Activated CD4-positive, alpha-beta T cell treated with anti-CD3 and anti-CD28 coated beads for 36 hours (primary cell): ENCODE measurements at regions of chr5 and their contacts with region 1.

Region 1: DNA sequence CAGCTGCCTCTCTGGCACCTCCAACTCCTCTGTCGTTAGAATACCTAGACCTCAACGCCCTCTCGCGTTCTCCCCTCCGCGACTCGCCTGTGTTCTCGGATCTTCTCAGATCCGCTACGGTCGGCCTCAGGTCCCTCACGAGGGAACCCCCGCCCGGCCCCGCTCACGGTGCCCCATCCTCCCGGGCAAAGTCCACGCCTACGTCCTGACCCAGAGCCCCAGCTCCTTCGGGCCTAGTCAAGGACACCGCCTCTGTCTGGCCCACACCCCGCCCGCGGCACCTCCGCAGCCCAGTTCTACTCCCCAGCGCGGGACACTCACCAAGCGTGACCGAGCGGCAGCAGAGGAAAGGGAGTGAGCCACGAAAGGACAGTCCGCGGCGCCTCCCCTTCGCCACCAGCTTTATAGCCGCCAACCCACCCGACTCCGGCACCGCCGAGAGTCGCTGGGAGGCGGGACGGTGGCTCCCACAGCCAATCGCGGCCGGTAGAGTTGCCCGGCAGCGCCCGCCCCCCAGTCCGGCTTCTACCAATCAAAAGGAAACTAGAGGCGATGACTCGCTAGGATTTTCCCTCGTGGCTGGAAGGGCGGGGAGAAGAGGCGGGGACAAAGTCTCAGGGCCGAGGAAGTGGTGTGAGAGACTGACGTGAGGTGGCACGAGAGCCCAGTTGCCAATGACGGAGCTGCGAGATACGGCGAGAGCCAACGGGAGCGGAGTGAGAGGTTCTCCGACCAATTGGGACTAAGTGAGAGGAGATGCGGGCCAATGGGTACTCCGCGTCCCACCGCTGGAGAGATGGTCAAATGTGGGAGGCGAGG is at the start of gene HMGCS1:
- DNase-seq: peak; percentile 99
- ATAC-seq: peak; percentile 90
- H3K4me3 Mint-ChIP-seq: peak within 1 kb of the TSS; percentile 93
- H3K27ac Mint-ChIP-seq: peak within 1 kb of the TSS; percentile 96
- H3K4me1 Mint-ChIP-seq: peaks cover 71% of the 10 kb centered on the region
- H3K27me3 Mint-ChIP-seq: no peaks in the 10 kb centered on the region
- total RNA-seq, gene HMGCS1: 95.2 to 102 TPM

Region 2: GRCh38 chr5:42950440-42951292 is 362.6 kb before region 1 on chr5:
- CTCF ChIA-PET with region 1: no interaction called
- POLR2A ChIA-PET with region 1: no interaction called
- intact Hi-C with region 1: loop called in 1 of 2 experiments (anchors 1 kb)
- DNase-seq: peak; percentile 82
- ATAC-seq: peak; percentile 59
- H3K4me3 Mint-ChIP-seq: peak overlapping the region; percentile 83
- H3K27ac Mint-ChIP-seq: peak overlapping the region; percentile 91
- H3K4me1 Mint-ChIP-seq: peaks cover 17% of the 10 kb centered on the region
- H3K27me3 Mint-ChIP-seq: no peaks in the 10 kb centered on the region

Region 3: GRCh38 chr5:43040287-43041098 is 272.8 kb before region 1 on chr5 and contains the start of gene ANXA2R:
- CTCF ChIA-PET with region 1: interaction called, 5 read pairs
- POLR2A ChIA-PET with region 1: no interaction called
- intact Hi-C with region 1: loop called in 1 of 2 experiments (anchors 1 kb)
- DNase-seq: peak; percentile 96
- ATAC-seq: peak; percentile 56
- H3K4me3 Mint-ChIP-seq: peak within 1 kb of the TSS; percentile 81
- H3K27ac Mint-ChIP-seq: peak within 1 kb of the TSS; percentile 94
- H3K4me1 Mint-ChIP-seq: peaks cover 39% of the 10 kb centered on the region
- H3K27me3 Mint-ChIP-seq: no peaks in the 10 kb centered on the region
- total RNA-seq, gene ANXA2R: 3.2 to 4.6 TPM

Region 4: DNA sequence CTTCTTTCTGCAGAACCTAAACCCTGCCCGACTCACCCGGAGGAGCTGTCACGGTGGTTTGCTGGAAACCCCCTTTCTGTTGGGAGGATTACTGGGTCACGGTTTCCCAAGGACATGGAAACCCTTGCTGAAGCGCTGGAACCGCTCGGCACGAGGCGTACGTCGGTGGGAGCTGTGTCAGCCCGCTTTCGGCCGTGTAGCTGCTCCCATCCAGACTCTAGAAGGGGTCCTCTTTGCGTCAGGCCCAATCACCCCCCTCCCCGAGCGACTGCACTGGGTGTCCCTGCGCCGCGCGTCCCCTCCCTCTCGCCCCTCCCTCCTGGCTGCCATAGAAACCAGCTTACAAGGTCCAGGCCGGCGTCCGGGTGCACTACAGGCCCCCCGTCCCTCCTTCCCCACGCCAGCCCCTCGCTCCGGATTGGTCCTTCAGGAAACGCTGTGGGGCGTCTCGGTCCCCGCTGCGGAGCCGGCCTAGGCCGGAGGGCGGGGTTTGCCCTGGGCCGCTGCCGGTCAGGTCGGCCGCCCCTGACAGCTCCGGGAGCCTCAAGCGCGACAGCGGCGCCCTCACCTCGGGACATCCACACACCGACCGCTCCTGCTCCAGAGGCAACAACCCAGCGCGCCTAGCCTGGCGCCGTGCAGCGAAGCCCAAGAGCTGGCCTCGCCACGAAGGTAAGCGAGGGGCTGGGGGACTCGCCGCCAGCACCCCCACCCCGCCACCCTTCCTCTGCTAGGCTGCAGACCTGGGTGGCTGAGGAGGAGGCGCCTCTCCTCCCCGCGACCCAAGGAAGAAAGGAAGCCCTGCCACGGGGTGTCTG is 121.3 kb before region 1 on chr5 and contains the start of gene NIM1K:
- CTCF ChIA-PET with region 1: interaction called, 3 read pairs
- POLR2A ChIA-PET with region 1: interaction called, 14 read pairs
- intact Hi-C with region 1: loop called (anchors 1 kb)
- DNase-seq: peak; percentile 65
- ATAC-seq: peak; percentile 32
- H3K4me3 Mint-ChIP-seq: peak within 1 kb of the TSS; percentile 79
- H3K27ac Mint-ChIP-seq: peak within 1 kb of the TSS; percentile 73
- H3K4me1 Mint-ChIP-seq: peaks cover 32% of the 10 kb centered on the region
- H3K27me3 Mint-ChIP-seq: peaks cover 16% of the 10 kb centered on the region
- total RNA-seq, gene NIM1K: 2.1 to 2.3 TPM

Region 5: GRCh38 chr5:43484106-43484849 is 171.0 kb after region 1 on chr5:
- CTCF ChIA-PET with region 1: interaction called, 13 read pairs
- POLR2A ChIA-PET with region 1: interaction called, 34 read pairs
- intact Hi-C with region 1: loop called (anchors 1 kb)
- DNase-seq: peak; percentile 92
- ATAC-seq: peak; percentile 73
- H3K4me3 Mint-ChIP-seq: peak overlapping the region; percentile 97
- H3K27ac Mint-ChIP-seq: peak overlapping the region; percentile 100
- H3K4me1 Mint-ChIP-seq: peaks cover 37% of the 10 kb centered on the region
- H3K27me3 Mint-ChIP-seq: no peaks in the 10 kb centered on the region

Region 6: GRCh38 chr5:43664501-43665040 is 351.3 kb after region 1 on chr5:
- CTCF ChIA-PET with region 1: no interaction called
- POLR2A ChIA-PET with region 1: no interaction called
- intact Hi-C with region 1: no loop called
- DNase-seq: no peak
- ATAC-seq: no peak
- H3K4me3 Mint-ChIP-seq: no peak overlapping the region
- H3K27ac Mint-ChIP-seq: no peak overlapping the region
- H3K4me1 Mint-ChIP-seq: no peaks in the 10 kb centered on the region
- H3K27me3 Mint-ChIP-seq: no peaks in the 10 kb centered on the region

Region 7: GRCh38 chr5:44808435-44809214 is 1495.4 kb after region 1 on chr5 and contains the start of gene MRPS30:
- CTCF ChIA-PET with region 1: no interaction called
- POLR2A ChIA-PET with region 1: no interaction called
- intact Hi-C with region 1: loop called in 1 of 2 experiments (anchors 10 kb)
- DNase-seq: peak; percentile 93
- ATAC-seq: peak; percentile 96
- H3K4me3 Mint-ChIP-seq: peak within 1 kb of the TSS; percentile 91
- H3K27ac Mint-ChIP-seq: peak within 1 kb of the TSS; percentile 98
- H3K4me1 Mint-ChIP-seq: peaks cover 27% of the 10 kb centered on the region
- H3K27me3 Mint-ChIP-seq: no peaks in the 10 kb centered on the region
- total RNA-seq, gene MRPS30: 59.7 to 73.3 TPM